Activated T-helper 1 cell treated with anti-CD3 and anti-CD28 coated beads, Interleukin-12 subunit alpha, Interleukin-12 subunit beta, Interleukin-2, Interleukin-4 antibody, amounts not matched to agents 30 ng/mL and 10 ng/mL and 1 ng/mL, durations not matched to agents 14 hours and 24 hours and 36 hours (primary cell): ENCODE measurements at regions of chr20 and their contacts with region 1.

Region 1: DNA sequence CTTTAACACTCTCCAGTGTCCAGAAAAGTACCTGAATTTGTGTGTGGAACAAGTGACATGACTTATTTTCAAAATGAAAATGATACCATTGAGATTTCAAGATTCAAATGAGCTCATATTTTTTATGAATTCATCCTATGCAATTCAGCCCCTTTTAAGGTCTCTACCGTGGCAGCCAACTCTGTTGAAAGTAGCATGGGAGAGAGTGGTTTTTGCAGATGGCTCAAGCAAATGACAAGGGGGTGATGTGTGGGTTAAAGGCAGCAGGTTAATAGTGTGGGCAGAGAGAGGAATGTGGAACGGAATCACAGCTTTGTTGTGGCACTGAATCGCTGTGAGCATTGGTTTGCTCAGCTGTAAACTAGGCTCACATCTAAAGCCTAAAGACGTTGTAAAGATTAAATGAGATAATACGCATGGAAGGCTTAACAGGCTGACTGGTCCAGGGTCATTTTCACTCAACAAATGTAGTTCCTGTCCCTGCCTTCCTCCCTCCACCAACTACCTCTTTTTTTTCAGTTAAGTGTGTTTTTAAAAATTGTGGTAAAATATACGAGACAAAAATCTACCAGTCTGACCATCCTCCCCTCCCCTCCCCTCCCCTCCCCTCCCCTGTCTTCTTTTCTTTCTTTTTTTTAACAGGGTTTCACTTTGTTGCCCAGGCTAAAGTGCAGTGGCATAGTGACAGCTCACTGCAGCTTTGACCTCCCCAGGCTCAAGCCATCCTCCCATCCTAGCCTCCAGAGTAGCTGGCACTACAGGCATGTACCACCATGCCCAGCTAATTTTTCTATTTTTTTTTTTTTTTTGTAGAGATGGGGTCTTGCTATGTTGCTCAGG is 114.7 kb upstream of the ZNF217 start:
- DNase-seq: peak; percentile 26
- H3K4me3 Mint-ChIP-seq: peak overlapping the region; percentile 61
- H3K27ac Mint-ChIP-seq: peak overlapping the region; percentile 98
- H3K4me1 Mint-ChIP-seq: peaks cover 39% of the 10 kb centered on the region
- H3K27me3 Mint-ChIP-seq: no peaks in the 10 kb centered on the region

Region 2: GRCh38 chr20:53609491-53610445 is 98.6 kb before region 1 on chr20:
- intact Hi-C with region 1: loop called (anchors 1 kb)
- DNase-seq: peak; percentile 68
- H3K4me3 Mint-ChIP-seq: peak overlapping the region; percentile 85
- H3K27ac Mint-ChIP-seq: peak overlapping the region; percentile 94
- H3K4me1 Mint-ChIP-seq: peaks cover 30% of the 10 kb centered on the region
- H3K27me3 Mint-ChIP-seq: no peaks in the 10 kb centered on the region

Region 3: DNA sequence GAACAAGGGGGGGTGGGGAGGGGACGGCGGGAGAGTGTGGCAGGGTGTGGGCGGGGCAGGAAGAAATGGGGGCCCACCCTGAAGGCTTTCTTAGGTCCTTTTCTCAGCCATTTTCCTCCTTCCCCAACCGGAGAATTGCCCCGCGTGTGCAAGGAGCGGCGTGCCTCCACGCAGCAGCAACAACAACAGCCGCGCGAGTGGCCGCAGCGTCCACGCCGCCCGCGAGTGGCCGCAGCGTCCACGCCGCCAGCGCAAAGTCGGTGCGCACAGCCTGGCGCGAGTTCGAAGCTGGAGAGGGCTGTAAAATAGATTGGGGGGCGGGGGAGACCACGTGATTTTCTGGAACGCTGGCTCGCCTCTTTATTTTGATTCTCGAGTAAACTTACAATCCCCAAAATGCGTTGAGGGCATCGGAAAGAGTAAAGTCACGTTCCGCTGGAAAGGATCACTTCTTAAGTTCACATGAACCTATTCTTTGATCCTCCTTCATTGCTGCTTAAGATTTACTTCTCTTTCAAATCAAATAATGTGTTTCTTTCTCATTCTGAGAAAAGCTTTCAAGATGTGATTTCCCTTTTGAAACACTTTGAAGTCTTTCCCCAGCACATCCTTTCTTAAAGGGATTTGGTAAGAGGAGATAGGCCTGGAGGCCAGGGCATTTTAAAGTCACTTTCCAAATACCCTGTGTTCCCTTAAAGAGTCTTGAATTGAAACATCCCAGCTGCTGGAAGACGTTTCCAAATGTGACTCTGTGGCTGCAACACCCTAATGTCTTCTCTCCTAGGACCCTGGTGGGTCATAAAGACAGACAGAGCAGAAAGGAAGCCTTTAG is 48.1 kb before region 1 on chr20:
- intact Hi-C with region 1: loop called (anchors 1 kb)
- DNase-seq: no peak
- H3K4me3 Mint-ChIP-seq: peak overlapping the region; percentile 75
- H3K27ac Mint-ChIP-seq: peak overlapping the region; percentile 87
- H3K4me1 Mint-ChIP-seq: peaks cover 71% of the 10 kb centered on the region
- H3K27me3 Mint-ChIP-seq: no peaks in the 10 kb centered on the region

Region 4: DNA sequence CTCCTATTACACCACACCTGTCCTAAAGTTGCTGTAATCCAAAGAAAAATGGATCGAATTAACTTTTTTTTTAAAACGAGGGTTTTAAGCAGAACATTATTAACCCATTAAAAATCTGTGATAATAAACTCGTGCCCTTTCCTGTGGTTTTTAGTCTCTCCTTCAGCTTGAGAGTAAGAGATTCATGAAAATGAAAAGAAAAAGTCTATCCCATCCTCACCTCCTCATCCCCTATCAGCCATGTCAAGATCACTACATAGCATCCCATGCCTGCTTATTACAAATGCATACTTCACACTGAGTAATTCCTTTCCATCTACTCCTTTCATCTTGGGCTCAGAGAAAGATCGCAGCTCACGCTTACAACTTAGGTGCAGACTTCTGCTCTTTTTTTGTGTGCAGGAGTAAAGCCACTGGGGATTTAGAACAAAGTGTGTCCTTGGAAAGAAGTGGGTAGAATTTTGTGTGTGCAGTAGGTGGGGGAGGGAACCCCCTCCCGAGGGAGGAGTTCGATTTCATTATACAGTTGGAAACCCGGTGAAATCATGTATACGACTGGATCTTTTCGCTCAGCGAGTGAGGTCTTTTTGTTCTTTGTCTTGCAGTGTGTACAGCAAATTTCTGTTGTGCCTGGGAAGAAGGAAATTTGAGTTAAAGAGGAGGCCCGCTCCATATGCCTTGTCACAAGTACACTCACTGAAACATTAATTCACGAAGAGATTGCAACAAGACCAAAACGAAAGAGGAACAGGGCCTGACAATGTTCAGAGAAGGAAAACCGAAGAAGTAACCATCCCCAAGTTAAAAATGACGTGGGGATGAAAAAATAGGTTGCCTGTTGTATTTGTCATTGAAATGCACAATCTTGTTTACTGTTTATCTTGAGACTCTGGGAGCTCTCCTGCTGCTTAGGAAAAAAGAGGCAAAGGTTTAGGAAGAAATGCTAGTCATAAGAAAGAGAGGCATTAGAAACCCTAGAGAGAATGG is 31.7 kb after region 1 on chr20:
- intact Hi-C with region 1: loop called (anchors 2 kb)
- DNase-seq: peak; percentile 14
- H3K4me3 Mint-ChIP-seq: peak overlapping the region; percentile 82
- H3K27ac Mint-ChIP-seq: peak overlapping the region; percentile 93
- H3K4me1 Mint-ChIP-seq: peaks cover 72% of the 10 kb centered on the region
- H3K27me3 Mint-ChIP-seq: no peaks in the 10 kb centered on the region

Region 5: DNA sequence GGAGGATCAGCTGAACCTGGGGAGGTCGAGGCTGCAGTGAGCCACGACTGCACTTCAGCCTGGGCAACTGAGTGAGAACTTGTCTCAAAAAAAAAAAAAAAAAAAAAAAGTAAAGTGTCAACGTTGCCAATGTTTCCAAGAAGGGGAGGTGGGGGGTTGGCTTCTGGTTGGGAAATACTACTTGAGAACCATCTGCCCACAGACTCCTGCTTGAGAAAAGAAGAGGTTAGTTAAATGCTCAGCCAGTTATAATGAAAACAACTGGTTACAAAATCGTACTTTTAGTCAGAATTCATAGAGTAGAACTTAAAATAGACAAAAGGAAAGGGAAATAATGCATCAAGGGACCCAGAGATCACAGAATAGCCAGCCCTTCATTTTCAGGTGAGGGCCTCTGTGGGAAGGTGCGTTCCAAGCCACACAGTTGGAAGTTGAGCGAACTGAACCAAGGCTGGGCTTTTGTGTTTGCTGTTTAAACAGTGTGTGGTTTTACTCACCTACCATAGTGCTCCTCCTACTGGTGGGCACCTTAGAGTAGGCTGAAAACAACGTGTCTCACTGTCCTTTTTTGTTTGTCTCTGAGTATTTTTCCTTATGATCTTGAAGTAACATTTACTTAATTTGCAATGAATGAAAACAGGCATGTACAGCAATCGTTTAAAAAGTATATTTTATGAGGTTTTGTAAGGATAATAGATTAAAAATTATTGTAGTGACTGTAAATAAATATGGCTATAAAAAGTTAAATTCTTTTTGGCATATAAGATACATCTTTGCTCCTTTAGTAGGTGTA is 161.3 kb after region 1 on chr20:
- intact Hi-C with region 1: loop called (anchors 1 kb)
- DNase-seq: peak; percentile 70
- H3K4me3 Mint-ChIP-seq: peak overlapping the region; percentile 62
- H3K27ac Mint-ChIP-seq: peak overlapping the region; percentile 85
- H3K4me1 Mint-ChIP-seq: peaks cover 73% of the 10 kb centered on the region
- H3K27me3 Mint-ChIP-seq: no peaks in the 10 kb centered on the region

Region 6: GRCh38 chr20:53915446-53916172 is 207.3 kb after region 1 on chr20:
- intact Hi-C with region 1: loop called (anchors 1 kb)
- DNase-seq: peak; percentile 84
- H3K4me3 Mint-ChIP-seq: peak overlapping the region; percentile 89
- H3K27ac Mint-ChIP-seq: peak overlapping the region; percentile 93
- H3K4me1 Mint-ChIP-seq: peaks cover 42% of the 10 kb centered on the region
- H3K27me3 Mint-ChIP-seq: no peaks in the 10 kb centered on the region

Region 7: DNA sequence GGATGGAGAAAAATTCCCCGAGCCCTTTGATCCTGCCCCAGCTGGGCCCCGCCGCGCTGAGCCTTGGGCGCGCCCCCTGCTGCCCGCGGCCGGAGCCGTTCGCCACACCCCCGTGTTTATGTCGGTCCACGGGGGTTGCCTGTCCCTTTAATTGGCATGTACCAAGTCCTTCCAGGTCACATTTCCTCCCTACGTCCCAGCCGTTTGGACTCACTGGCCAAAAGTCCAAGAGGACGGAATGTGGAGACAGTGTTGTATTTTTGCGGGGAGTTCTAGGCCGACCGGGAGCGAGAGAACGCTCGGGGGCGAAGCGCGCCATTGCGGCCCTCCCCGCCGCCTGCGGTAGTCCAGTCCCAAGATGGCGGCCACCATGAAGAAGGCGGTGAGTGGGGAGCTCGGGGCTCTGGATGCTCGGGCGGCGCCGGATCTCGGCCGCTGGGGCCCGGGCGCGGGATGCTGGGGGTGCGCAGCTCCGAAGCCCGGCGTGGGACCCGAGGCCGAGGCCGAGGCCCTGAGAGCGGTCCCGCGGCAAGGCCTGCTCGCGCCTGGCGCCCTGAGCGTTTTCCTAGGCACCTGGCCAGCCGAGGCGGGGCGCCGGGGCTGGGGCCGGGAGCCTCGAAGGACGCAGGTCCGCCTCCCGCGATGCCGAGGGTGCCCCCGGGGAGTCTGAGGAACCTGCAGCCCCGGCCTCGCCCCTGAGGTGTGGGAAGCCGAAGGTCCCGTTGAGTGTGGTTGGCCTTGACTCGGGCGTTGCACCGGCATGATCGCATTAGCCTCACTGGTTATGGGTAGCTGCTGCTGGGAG is 499.6 kb after region 1 on chr20 and contains the start of gene PFDN4:
- intact Hi-C with region 1: loop called (anchors 2 kb)
- DNase-seq: peak; percentile 79
- H3K4me3 Mint-ChIP-seq: peak within 1 kb of the TSS; percentile 96
- H3K27ac Mint-ChIP-seq: peak within 1 kb of the TSS; percentile 99
- H3K4me1 Mint-ChIP-seq: peaks cover 31% of the 10 kb centered on the region
- H3K27me3 Mint-ChIP-seq: no peaks in the 10 kb centered on the region
- total RNA-seq, gene PFDN4: 72.6 and 75.8 TPM in 2 replicates